HCT116 (cell line): ENCODE measurements at regions of chr17 and their contacts with region 1.

Region 1: DNA sequence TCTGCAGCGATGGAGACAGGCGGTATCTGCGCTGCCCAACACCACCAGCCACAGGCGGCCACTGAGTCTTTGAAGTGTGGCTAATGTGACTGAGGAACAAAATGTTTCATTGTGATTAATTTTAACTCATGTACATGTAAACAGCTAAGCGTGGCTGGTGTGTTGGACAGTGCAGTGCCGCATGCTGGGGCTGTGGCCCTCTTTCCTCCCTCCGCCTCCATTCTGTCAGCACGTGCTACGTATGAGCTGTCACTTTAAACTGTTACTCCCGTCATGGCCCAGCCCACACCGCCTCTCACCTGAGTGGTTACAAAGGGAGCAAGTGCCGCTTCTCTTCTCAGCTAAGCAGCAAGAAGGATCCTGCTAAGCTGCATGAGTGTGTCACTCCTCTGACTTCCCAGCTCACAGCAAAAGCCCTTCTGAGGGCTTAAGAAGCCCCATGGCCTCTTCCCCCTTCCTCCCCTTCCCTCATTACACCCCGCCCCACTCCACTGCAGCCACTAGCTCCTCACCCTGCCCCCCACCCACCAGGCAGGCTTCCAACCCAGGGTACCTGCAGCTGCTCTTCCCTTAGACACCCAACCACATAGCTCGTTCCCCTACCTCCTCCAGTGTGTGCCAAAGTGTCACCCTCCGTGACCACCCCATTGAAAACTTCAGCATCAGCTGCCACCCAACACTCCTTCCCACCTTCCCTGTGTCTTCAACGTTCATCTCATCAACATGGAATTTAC is 15.0 kb downstream of the HASPIN start:
- DNase-seq: no peak
- ATAC-seq: peak; percentile 71
- H3K4me3 ChIP-seq: no peak overlapping the region
- H3K27ac ChIP-seq: no peak overlapping the region
- H3K4me1 ChIP-seq: peaks cover 2 to 21% of the 10 kb centered on the region in 2 experiments; a peak in 3 of 4 replicates
- H3K27me3 ChIP-seq: no peaks in the 10 kb centered on the region
- CTCF ChIP-seq: no peak
- POLR2A ChIP-seq: no peak
- RAD21 ChIP-seq: no peak

Region 2: GRCh38 chr17:3641717-3642486 is 96.8 kb before region 1 on chr17:
- CTCF ChIA-PET with region 1: no interaction called
- POLR2A ChIA-PET with region 1: no interaction called
- RAD21 ChIA-PET with region 1: no interaction called
- intact Hi-C with region 1: no loop called
- DNase-seq: no peak
- ATAC-seq: no peak
- H3K4me3 ChIP-seq: no peak overlapping the region
- H3K27ac ChIP-seq: no peak overlapping the region
- H3K4me1 ChIP-seq: peaks cover 0 to 4% of the 10 kb centered on the region in 2 experiments; a peak in 1 of 4 replicates
- H3K27me3 ChIP-seq: no peaks in the 10 kb centered on the region
- CTCF ChIP-seq: no peak
- POLR2A ChIP-seq: no peak
- RAD21 ChIP-seq: no peak

Region 3: DNA sequence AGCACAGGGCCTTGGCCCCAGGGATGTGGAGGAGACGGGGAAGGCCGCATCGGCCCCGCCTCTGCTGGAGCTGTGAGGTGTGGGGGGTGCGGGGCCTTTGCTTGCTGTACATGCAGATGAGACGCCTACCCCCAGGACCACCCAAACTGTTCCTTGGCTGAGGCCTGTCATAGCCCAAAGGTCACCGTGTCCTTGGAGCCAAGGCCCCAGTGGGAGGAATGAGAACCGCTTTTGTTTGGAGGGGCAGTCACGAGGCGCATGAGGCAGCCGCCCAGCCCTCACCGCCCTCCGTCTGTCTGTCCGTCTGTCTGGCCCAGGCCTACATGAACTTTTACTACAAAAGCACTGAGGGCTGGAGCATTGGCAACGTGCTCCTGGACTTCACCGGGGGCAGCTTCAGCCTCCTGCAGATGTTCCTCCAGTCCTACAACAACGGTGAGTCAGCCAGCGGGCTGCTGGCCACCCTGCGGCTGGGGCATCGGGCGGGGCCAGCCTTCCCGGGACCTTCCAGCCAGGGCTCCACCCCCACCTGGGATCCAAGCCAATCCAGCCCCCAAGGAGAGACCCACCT is 79.1 kb before region 1 on chr17:
- CTCF ChIA-PET with region 1: no interaction called
- POLR2A ChIA-PET with region 1: no interaction called
- RAD21 ChIA-PET with region 1: no interaction called
- intact Hi-C with region 1: no loop called
- DNase-seq: no peak
- ATAC-seq: peak; percentile 77
- H3K4me3 ChIP-seq: no peak overlapping the region
- H3K27ac ChIP-seq: peak overlapping the region; percentile 70
- H3K4me1 ChIP-seq: peaks cover 12 to 16% of the 10 kb centered on the region in 2 experiments
- H3K27me3 ChIP-seq: no peaks in the 10 kb centered on the region
- CTCF ChIP-seq: peak in 1 of 3 experiments; percentile 11; a peak in 1 of 6 replicates
- POLR2A ChIP-seq: no peak
- RAD21 ChIP-seq: no peak

Region 4: GRCh38 chr17:3754458-3755334 is 16.0 kb after region 1 on chr17:
- CTCF ChIA-PET with region 1: interaction called, 20 read pairs
- POLR2A ChIA-PET with region 1: no interaction called
- RAD21 ChIA-PET with region 1: interaction called in 1 of 2 experiments, 3 read pairs
- intact Hi-C with region 1: no loop called
- DNase-seq: peak; percentile 95
- ATAC-seq: peak; percentile 87
- H3K4me3 ChIP-seq: peak overlapping the region; percentile 65 to 81
- H3K27ac ChIP-seq: peak overlapping the region; percentile 64
- H3K4me1 ChIP-seq: peaks cover 4 to 16% of the 10 kb centered on the region in 2 experiments; a peak in 3 of 4 replicates
- H3K27me3 ChIP-seq: no peaks in the 10 kb centered on the region
- CTCF ChIP-seq: no peak
- POLR2A ChIP-seq: peak; percentile 56
- RAD21 ChIP-seq: no peak

Region 5: GRCh38 chr17:3827124-3827773 is 88.5 kb after region 1 on chr17:
- CTCF ChIA-PET with region 1: interaction called, 43 read pairs
- POLR2A ChIA-PET with region 1: no interaction called
- RAD21 ChIA-PET with region 1: interaction called, 4 to 8 read pairs
- intact Hi-C with region 1: loop called (anchors 1 kb)
- DNase-seq: peak; percentile 58
- ATAC-seq: peak; percentile 83
- H3K4me3 ChIP-seq: no peak overlapping the region
- H3K27ac ChIP-seq: no peak overlapping the region
- H3K4me1 ChIP-seq: no peaks in the 10 kb centered on the region
- H3K27me3 ChIP-seq: no peaks in the 10 kb centered on the region
- CTCF ChIP-seq: peak; percentile 63 to 92 (median 88)
- POLR2A ChIP-seq: no peak
- RAD21 ChIP-seq: peak; percentile 82

Region 6: DNA sequence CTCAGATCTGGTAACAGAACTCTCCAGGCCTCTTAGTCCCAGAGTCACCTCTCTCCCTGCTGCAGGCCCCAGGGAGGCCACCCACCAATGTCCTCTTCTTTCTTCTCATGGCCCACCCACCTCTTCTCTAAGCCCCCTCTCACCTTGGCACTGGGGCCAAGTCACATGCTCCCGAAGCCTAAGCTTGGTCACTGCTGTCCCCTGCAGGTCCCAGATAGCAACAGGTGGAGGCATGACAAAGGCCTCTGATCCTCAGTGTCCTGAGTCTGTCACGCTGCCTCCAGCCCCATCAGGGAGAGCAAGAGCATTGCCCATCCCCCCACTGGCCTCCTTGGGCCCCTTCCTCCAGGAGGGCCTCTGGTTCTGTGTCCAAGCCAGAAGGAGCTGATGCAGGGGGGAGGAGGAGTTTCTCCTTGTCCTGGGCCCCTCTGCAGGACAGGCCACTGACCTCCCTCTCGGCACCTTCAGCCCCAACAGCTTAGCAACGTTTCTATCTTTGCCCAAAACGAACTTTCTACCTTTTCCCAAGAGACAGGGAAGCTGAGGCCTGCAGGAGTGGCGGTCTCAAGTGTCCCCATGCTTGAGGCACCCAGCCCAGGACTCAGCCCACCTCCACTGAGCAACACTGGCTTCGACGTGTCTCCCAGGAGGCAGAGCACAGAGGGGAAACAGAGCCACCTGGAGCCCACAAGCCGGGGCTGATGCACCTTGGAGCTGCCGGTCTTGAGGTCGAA is 168.9 kb after region 1 on chr17:
- CTCF ChIA-PET with region 1: interaction called, 18 read pairs
- POLR2A ChIA-PET with region 1: no interaction called
- RAD21 ChIA-PET with region 1: interaction called, 3 to 5 read pairs
- intact Hi-C with region 1: loop called (anchors 5 kb)
- DNase-seq: no peak
- ATAC-seq: peak; percentile 77
- H3K4me3 ChIP-seq: no peak overlapping the region
- H3K27ac ChIP-seq: no peak overlapping the region
- H3K4me1 ChIP-seq: no peaks in the 10 kb centered on the region
- H3K27me3 ChIP-seq: no peaks in the 10 kb centered on the region
- CTCF ChIP-seq: peak; percentile 64 to 89 (median 65)
- POLR2A ChIP-seq: no peak
- RAD21 ChIP-seq: peak; percentile 96

Region 7: GRCh38 chr17:4004517-4005295 is 266.0 kb after region 1 on chr17:
- CTCF ChIA-PET with region 1: interaction called, 4 read pairs
- POLR2A ChIA-PET with region 1: no interaction called
- RAD21 ChIA-PET with region 1: no interaction called
- intact Hi-C with region 1: loop called (anchors 1 kb)
- DNase-seq: peak; percentile 6
- ATAC-seq: peak; percentile 93
- H3K4me3 ChIP-seq: no peak overlapping the region
- H3K27ac ChIP-seq: no peak overlapping the region
- H3K4me1 ChIP-seq: peaks cover 0 to 11% of the 10 kb centered on the region in 2 experiments; a peak in 2 of 4 replicates
- H3K27me3 ChIP-seq: no peaks in the 10 kb centered on the region
- CTCF ChIP-seq: peak; percentile 89 to 94 (median 93)
- POLR2A ChIP-seq: no peak
- RAD21 ChIP-seq: peak; percentile 93